Right cardiac atrium (tissue), 5 donors: ENCODE measurements at regions of chr7 and their contacts with region 1.

Region 1: GRCh38 chr7:30963805-30964204 is at the start of gene GHRHR:
- DNase-seq: no peak
- ATAC-seq: peak in 1 of 2 donors; percentile 24
- H3K4me3 ChIP-seq: no peak within 1 kb of the TSS
- H3K27ac ChIP-seq: no peak within 1 kb of the TSS
- H3K4me1 ChIP-seq: no peaks in the 10 kb centered on the region
- H3K27me3 ChIP-seq: no peaks in the 10 kb centered on the region
- total RNA-seq, gene GHRHR: not detected

Region 2: DNA sequence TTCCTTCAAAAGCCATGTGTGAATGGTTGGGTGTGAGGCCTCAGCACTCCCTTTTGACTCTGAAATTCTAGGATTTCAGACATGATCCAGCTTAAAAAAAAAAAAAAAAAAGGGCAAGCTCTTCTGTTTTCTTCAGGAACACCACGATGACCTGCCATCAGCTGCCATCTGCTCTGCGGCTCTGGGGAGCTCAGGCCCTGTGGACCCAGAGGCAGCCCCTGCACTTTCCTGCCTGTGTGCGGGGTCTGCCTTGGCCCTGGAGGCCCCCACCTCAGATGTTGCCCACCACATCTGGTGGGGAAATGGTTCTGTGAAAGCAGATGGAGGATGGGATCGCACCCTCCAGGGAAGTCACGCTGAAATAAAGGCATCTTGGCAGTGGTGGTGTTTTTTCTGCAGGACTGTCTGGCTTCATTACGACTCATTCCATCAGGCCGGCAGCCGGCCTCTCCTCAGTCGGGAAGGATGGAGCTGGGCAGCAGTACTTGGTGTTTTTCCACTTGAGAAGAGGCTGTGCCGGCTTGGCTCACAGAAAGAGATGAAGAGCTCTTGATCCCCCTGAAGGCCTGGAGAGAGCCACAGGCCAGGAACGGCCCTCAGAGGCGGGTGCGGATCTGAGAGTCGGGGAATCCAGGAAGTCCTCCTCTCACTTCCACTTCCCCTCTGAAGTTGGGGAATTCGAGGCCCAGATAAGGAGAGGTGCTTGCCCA is 118.2 kb before region 1 on chr7:
- intact Hi-C with region 1: no loop called
- DNase-seq: peak; percentile 61 to 88 (median 79)
- ATAC-seq: peak; percentile 73 to 79
- H3K4me3 ChIP-seq: no peak overlapping the region
- H3K27ac ChIP-seq: peak overlapping the region; percentile 71
- H3K4me1 ChIP-seq: peaks cover 14% of the 10 kb centered on the region
- H3K27me3 ChIP-seq: no peaks in the 10 kb centered on the region

Region 3: GRCh38 chr7:30920584-30921539 is 42.9 kb before region 1 on chr7:
- intact Hi-C with region 1: loop called in 1 of 4 experiments (anchors 5 kb)
- DNase-seq: peak; percentile 72 to 88 (median 83)
- ATAC-seq: peak; percentile 79 to 83
- H3K4me3 ChIP-seq: no peak overlapping the region
- H3K27ac ChIP-seq: peak overlapping the region; percentile 94
- H3K4me1 ChIP-seq: peaks cover 32% of the 10 kb centered on the region
- H3K27me3 ChIP-seq: no peaks in the 10 kb centered on the region

Region 4: DNA sequence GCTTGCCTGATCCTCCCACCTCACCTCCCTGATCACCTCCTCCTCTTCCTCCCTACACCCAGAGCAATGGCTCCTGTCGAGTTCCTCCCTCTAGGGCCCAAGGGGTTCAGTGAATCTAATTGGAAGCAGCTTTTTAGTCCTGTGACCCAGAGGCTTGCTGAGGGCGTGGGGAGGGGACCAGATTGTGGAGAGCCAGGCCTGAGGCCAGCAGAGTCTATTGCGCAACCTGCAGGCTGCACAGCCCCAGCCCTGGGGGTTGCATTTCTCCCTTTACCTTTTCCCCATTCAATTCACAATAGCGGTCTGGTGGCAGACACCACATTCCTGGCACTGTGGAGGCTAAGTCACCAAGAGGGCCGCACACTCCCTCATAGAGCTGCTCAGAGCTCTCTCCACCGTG is 32.5 kb after region 1 on chr7:
- intact Hi-C with region 1: no loop called
- DNase-seq: peak; percentile 62 to 87 (median 84)
- ATAC-seq: peak; percentile 56 to 74
- H3K4me3 ChIP-seq: no peak overlapping the region
- H3K27ac ChIP-seq: no peak overlapping the region
- H3K4me1 ChIP-seq: no peaks in the 10 kb centered on the region
- H3K27me3 ChIP-seq: no peaks in the 10 kb centered on the region

Region 5: DNA sequence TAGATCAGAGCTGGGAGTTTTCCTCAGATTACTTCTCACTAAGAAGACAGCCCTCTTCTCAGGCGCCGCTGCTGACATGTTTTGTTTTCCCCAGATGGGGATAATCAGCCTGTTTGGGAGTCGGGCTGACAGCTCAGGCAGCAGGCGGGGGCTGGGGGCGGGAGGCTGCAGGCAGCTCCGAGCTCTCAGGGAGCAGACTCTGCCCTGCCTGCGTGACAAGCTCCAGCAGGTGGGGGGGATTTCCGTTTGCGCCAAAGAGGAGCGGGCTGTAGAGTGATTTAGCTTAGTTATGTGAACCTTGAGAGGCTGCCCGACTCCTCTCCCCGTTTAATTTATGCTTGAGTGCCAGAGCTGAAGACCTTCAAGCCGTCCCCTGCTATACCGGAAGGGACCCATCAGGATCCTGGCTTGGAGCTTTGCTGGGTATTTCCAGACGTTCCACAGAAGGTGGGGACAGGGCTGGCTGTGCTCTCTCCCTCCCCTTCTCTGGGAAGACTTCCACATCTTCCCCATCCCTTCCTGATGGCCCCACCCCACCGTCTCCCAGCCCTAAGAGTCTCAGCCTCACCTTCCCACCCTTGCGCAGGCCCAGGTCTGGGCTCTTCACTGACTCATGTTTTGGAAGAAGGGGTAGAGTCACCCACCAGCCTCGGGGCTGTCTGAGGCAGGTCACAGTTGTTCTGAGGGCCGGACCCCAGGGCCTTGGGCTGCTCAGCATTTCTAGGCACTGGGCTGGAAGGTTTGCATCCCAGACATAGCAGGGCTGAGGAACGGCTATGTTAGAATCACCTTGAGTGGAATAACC is 63.6 kb after region 1 on chr7:
- intact Hi-C with region 1: no loop called
- DNase-seq: peak in 2 of 3 donors; percentile 78 to 81
- ATAC-seq: peak; percentile 50 to 56
- H3K4me3 ChIP-seq: no peak overlapping the region
- H3K27ac ChIP-seq: no peak overlapping the region
- H3K4me1 ChIP-seq: no peaks in the 10 kb centered on the region
- H3K27me3 ChIP-seq: no peaks in the 10 kb centered on the region